Naive thymus-derived CD4-positive, alpha-beta T cell (primary cell): ENCODE measurements at regions of chr6 and their contacts with region 1.

Region 1: GRCh38 chr6:25490018-25490801 is 161.8 kb upstream of the SCGN start:
- DNase-seq: peak; percentile 30 to 76 (median 71)
- ATAC-seq: peak; percentile 90
- H3K4me3 ChIP-seq: no peak overlapping the region
- H3K4me3 Mint-ChIP-seq: peak overlapping the region in 1 of 10 donors; percentile 39
- H3K27ac ChIP-seq: no peak overlapping the region
- H3K27ac Mint-ChIP-seq: peak overlapping the region in 8 of 9 donors; percentile 8 to 94 (median 66)
- H3K4me1 ChIP-seq: no peaks in the 10 kb centered on the region
- H3K4me1 Mint-ChIP-seq: peaks cover 7 to 13% (median 9%) of the 10 kb centered on the region in 7 donors
- H3K27me3 ChIP-seq: no peaks in the 10 kb centered on the region
- H3K27me3 Mint-ChIP-seq: no peaks in the 10 kb centered on the region

Region 2: DNA sequence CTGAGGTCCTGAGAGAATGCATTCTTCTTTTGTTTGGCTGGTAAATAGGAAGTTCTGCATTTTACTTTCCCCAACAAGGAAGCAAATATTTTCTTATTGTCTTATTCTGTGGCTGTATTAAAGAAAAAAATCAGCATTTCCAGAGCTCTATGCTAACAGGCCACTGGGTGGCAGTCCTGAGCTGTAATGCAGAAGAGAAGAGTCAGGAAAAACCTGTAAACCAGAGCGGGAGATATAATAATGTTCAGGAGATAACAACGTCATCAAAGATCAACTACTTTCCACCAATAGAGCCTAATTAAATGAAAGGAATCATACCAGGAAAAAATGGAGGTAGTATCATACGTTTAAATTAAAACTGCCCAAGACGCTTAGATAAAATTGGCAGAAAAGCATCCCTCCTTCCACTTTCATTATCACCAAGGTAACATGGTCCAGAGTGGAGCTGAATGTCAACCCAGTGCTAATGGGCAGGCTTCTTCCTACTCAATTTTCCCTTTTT is 266.7 kb before region 1 on chr6:
- CTCF ChIA-PET with region 1: interaction called, 19 read pairs
- POLR2A ChIA-PET with region 1: no interaction called
- intact Hi-C with region 1: loop called (anchors 1 kb)
- DNase-seq: peak; percentile 32 to 63 (median 58)
- ATAC-seq: peak; percentile 78
- H3K4me3 ChIP-seq: peak overlapping the region; percentile 16
- H3K4me3 Mint-ChIP-seq: peak overlapping the region; percentile 31 to 85 (median 67)
- H3K27ac ChIP-seq: no peak overlapping the region
- H3K27ac Mint-ChIP-seq: no peak overlapping the region
- H3K4me1 ChIP-seq: peaks cover 0 to 6% of the 10 kb centered on the region in 2 donors
- H3K4me1 Mint-ChIP-seq: peaks cover 9 to 14% (median 11%) of the 10 kb centered on the region in 7 donors
- H3K27me3 ChIP-seq: no peaks in the 10 kb centered on the region
- H3K27me3 Mint-ChIP-seq: peaks cover 0 to 22% (median 8%) of the 10 kb centered on the region in 5 donors

Region 3: DNA sequence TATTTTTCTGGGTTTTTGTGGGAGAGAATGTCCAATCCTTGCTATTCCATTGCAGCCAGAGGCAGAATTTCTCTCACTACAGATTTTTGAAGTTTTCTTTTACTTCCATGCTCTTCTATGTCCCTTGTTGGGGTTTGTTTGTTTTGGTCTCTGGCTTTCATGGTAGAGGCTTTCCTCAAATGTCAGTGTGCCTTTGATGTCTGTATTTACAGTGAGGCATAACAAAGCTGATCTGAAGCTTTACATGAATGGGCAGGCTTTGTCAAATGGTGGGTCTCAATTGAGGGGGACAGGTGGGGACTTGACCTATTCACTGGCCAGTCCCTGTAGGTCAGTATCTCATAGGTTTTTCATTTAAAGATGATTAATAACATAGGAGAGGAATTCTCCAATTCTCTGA is 219.7 kb before region 1 on chr6:
- CTCF ChIA-PET with region 1: interaction called, 111 read pairs
- POLR2A ChIA-PET with region 1: interaction called, 5 read pairs
- intact Hi-C with region 1: loop called (anchors 1 kb)
- DNase-seq: no peak
- ATAC-seq: no peak
- H3K4me3 ChIP-seq: no peak overlapping the region
- H3K4me3 Mint-ChIP-seq: no peak overlapping the region
- H3K27ac ChIP-seq: no peak overlapping the region
- H3K27ac Mint-ChIP-seq: no peak overlapping the region
- H3K4me1 ChIP-seq: no peaks in the 10 kb centered on the region
- H3K4me1 Mint-ChIP-seq: peaks cover 0 to 2% (median under 1%) of the 10 kb centered on the region in 7 donors
- H3K27me3 ChIP-seq: no peaks in the 10 kb centered on the region
- H3K27me3 Mint-ChIP-seq: peaks cover 13 to 53% (median 23%) of the 10 kb centered on the region in 5 donors

Region 4: GRCh38 chr6:25342802-25343201 is 147.4 kb before region 1 on chr6:
- CTCF ChIA-PET with region 1: interaction called, 21 read pairs
- POLR2A ChIA-PET with region 1: no interaction called
- intact Hi-C with region 1: loop called in 1 of 2 experiments (anchors 1 kb)
- DNase-seq: no peak
- ATAC-seq: no peak
- H3K4me3 ChIP-seq: no peak overlapping the region
- H3K4me3 Mint-ChIP-seq: peak overlapping the region in 1 of 10 donors; percentile 12
- H3K27ac ChIP-seq: no peak overlapping the region
- H3K27ac Mint-ChIP-seq: peak overlapping the region in 1 of 9 donors; percentile 48
- H3K4me1 ChIP-seq: no peaks in the 10 kb centered on the region
- H3K4me1 Mint-ChIP-seq: peaks cover 0 to 30% (median 25%) of the 10 kb centered on the region in 7 donors
- H3K27me3 ChIP-seq: no peaks in the 10 kb centered on the region
- H3K27me3 Mint-ChIP-seq: no peaks in the 10 kb centered on the region

Region 5: DNA sequence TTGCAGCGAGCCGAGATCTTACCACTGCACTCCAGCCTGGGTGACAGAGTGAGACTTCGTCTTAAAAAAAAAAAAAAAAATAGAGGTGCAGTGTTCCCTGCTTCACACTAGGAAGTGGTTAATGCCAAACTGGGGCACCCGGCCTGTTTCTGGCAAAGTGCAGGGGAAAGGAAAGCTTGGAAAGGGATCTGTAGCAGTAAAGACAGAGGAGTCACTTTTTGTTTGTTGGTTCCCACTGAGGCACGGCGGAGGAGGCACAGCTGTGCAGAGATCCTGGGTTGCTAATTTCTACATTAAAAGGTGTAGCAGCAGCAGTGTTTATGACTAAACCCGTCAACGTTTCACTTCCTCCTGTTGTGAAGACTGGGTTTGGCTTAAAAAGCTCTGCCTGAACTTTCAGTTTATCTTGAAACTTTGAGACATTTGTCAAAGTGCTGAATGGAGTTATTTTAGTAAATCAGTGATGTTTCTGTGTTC is 85.5 kb before region 1 on chr6:
- CTCF ChIA-PET with region 1: interaction called, 16 read pairs
- POLR2A ChIA-PET with region 1: interaction called, 3 read pairs
- intact Hi-C with region 1: no loop called
- DNase-seq: peak; percentile 12 to 74 (median 56)
- ATAC-seq: peak; percentile 90
- H3K4me3 ChIP-seq: peak overlapping the region; percentile 44
- H3K4me3 Mint-ChIP-seq: peak overlapping the region in 1 of 10 donors; percentile 81
- H3K27ac ChIP-seq: peak overlapping the region; percentile 71
- H3K27ac Mint-ChIP-seq: no peak overlapping the region
- H3K4me1 ChIP-seq: peaks cover 16 to 41% of the 10 kb centered on the region in 2 donors
- H3K4me1 Mint-ChIP-seq: peaks cover 3 to 39% (median 26%) of the 10 kb centered on the region in 7 donors
- H3K27me3 ChIP-seq: no peaks in the 10 kb centered on the region
- H3K27me3 Mint-ChIP-seq: no peaks in the 10 kb centered on the region

Region 6: GRCh38 chr6:25556516-25556915 is 66.3 kb after region 1 on chr6:
- CTCF ChIA-PET with region 1: interaction called, 12 read pairs
- POLR2A ChIA-PET with region 1: interaction called, 3 read pairs
- intact Hi-C with region 1: loop called in 1 of 2 experiments (anchors 1 kb)
- DNase-seq: peak; percentile 14 to 72 (median 55)
- ATAC-seq: peak; percentile 71
- H3K4me3 ChIP-seq: no peak overlapping the region
- H3K4me3 Mint-ChIP-seq: no peak overlapping the region
- H3K27ac ChIP-seq: no peak overlapping the region
- H3K27ac Mint-ChIP-seq: no peak overlapping the region
- H3K4me1 ChIP-seq: no peaks in the 10 kb centered on the region
- H3K4me1 Mint-ChIP-seq: peaks cover 0 to 6% (median 3%) of the 10 kb centered on the region in 7 donors
- H3K27me3 ChIP-seq: no peaks in the 10 kb centered on the region
- H3K27me3 Mint-ChIP-seq: peaks cover 0 to 6% (median 0%) of the 10 kb centered on the region in 5 donors

Region 7: GRCh38 chr6:25793970-25794369 is 303.8 kb after region 1 on chr6:
- CTCF ChIA-PET with region 1: no interaction called
- POLR2A ChIA-PET with region 1: no interaction called
- intact Hi-C with region 1: no loop called
- DNase-seq: no peak
- ATAC-seq: no peak
- H3K4me3 ChIP-seq: no peak overlapping the region
- H3K4me3 Mint-ChIP-seq: no peak overlapping the region
- H3K27ac ChIP-seq: no peak overlapping the region
- H3K27ac Mint-ChIP-seq: no peak overlapping the region
- H3K4me1 ChIP-seq: no peaks in the 10 kb centered on the region
- H3K4me1 Mint-ChIP-seq: no peaks in the 10 kb centered on the region
- H3K27me3 ChIP-seq: no peaks in the 10 kb centered on the region
- H3K27me3 Mint-ChIP-seq: peaks cover 0 to 16% (median 0%) of the 10 kb centered on the region in 5 donors

Region 8: GRCh38 chr6:26401987-26402658 is 911.9 kb after region 1 on chr6 and contains the start of gene BTN3A1:
- CTCF ChIA-PET with region 1: no interaction called
- POLR2A ChIA-PET with region 1: no interaction called
- intact Hi-C with region 1: no loop called
- DNase-seq: peak in 8 of 9 donors; percentile 65 to 85 (median 78)
- ATAC-seq: peak; percentile 93
- H3K4me3 ChIP-seq: peak within 1 kb of the TSS; percentile 95
- H3K4me3 Mint-ChIP-seq: peak within 1 kb of the TSS; percentile 94 to 100 (median 100)
- H3K27ac ChIP-seq: peak within 1 kb of the TSS; percentile 96
- H3K27ac Mint-ChIP-seq: peak within 1 kb of the TSS; percentile 97 to 100 (median 99)
- H3K4me1 ChIP-seq: peaks cover 35 to 37% of the 10 kb centered on the region in 2 donors
- H3K4me1 Mint-ChIP-seq: peaks cover 37 to 58% (median 53%) of the 10 kb centered on the region in 7 donors
- H3K27me3 ChIP-seq: no peaks in the 10 kb centered on the region
- H3K27me3 Mint-ChIP-seq: no peaks in the 10 kb centered on the region
- total RNA-seq, gene BTN3A1: 122 to 242 (median 235) TPM